ENCODE measurements at regions of chr11 and their contacts with region 1.

Region 1: GRCh38 chr11:13335319-13335718 is 57.7 kb downstream of the BMAL1 start:
- DNase-seq: peak; percentile 74
- H3K4me3 Mint-ChIP-seq: no peak overlapping the region
- H3K27ac Mint-ChIP-seq: no peak overlapping the region
- H3K4me1 Mint-ChIP-seq: peaks cover 68% of the 10 kb centered on the region
- H3K27me3 Mint-ChIP-seq: no peaks in the 10 kb centered on the region

Region 2: GRCh38 chr11:13183094-13183825 is 152.1 kb before region 1 on chr11:
- CTCF ChIA-PET with region 1: interaction called, 11 read pairs
- POLR2A ChIA-PET with region 1: no interaction called
- DNase-seq: peak; percentile 21
- H3K4me3 Mint-ChIP-seq: no peak overlapping the region
- H3K27ac Mint-ChIP-seq: no peak overlapping the region
- H3K4me1 Mint-ChIP-seq: peaks cover 8% of the 10 kb centered on the region
- H3K27me3 Mint-ChIP-seq: peaks cover 18% of the 10 kb centered on the region

Region 3: DNA sequence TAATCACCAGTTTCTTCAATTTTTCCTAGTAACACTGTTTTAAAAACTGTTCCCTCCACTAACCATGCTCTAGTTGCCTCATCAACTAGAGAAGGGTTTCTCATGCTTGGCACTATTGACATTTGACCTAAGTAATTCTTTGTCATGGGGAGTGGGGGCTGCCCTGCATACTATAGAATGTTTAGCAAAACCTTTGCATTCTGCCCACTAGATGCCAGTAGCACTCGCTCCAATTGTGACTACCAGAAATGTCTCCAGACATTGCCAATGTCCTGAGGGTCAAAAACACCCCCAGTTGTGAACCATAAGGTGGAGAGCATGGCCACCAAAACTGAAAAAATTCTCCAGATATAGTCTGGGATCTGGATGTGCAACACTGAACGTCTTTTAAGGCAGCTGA is 85.3 kb before region 1 on chr11:
- CTCF ChIA-PET with region 1: interaction called, 13 read pairs
- POLR2A ChIA-PET with region 1: no interaction called
- DNase-seq: no peak
- H3K4me3 Mint-ChIP-seq: no peak overlapping the region
- H3K27ac Mint-ChIP-seq: no peak overlapping the region
- H3K4me1 Mint-ChIP-seq: no peaks in the 10 kb centered on the region
- H3K27me3 Mint-ChIP-seq: peaks cover 17% of the 10 kb centered on the region

Region 4: DNA sequence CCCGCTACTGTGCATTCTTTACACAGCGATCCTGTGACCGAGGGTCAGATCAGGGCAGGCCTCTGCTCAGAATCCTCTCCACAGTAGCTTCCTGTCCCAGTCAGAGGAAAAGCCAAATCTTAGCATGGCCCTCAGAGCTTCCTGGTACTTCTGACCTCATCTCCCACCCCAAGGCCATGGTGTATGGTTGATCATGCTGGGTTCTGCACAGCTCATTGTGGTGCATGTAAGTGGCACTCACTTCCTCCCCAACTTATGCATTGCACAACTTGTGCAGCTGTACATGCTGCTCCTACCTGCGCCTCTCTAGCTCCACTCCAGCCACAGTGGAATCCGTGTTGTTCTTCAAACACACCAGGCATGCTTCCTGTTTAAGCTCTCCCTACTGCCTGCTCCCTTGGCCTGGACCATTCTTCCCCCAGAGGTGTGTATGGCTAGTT is 37.4 kb before region 1 on chr11:
- CTCF ChIA-PET with region 1: no interaction called
- POLR2A ChIA-PET with region 1: interaction called, 11 read pairs
- DNase-seq: peak; percentile 66
- H3K4me3 Mint-ChIP-seq: no peak overlapping the region
- H3K27ac Mint-ChIP-seq: peak overlapping the region; percentile 74
- H3K4me1 Mint-ChIP-seq: peaks cover 76% of the 10 kb centered on the region
- H3K27me3 Mint-ChIP-seq: no peaks in the 10 kb centered on the region

Region 5: DNA sequence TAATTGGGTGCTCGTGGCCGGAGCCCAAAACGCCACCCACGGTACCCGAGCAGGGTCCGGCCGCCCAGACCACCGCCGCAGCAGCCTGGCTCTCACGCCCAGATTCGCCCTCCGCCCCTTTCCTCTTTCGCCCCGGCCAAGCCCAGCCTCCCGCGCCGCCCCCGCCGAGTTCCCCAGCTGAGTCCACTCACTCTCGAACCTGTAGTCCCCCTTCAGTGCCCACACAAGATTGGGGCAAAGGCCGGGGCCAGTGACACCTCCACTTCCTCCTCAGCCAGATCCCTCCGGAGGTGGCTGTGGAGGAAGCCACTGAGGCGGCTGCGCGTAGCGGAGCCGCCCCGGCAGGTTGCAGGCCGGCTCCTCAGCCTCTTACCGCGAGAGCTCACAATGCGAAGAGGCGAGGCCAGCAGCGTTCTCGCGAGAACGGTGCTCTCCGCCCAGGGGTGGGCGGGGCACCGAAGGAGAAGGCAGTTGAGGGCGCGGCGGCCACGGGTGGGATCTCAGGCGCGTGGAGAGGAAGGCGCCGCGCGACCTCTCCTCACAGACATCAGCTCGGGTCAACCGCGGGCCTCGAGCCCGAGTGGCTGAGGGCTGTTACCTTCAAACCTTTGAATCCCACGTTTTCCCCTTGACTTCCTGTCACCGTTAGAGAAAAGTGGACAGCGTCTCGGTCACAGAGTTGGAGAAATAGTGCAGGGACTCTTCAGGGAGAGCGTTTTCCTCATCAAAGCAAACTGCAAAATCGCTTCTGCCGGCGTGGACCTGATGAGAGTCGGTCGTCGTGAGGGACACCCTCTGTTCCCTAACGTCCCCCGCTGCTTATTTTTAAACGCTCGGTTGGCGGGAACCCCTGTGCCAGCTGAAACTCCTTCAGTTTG is 127.8 kb after region 1 on chr11 and contains the start of gene BTBD10:
- CTCF ChIA-PET with region 1: interaction called, 3 read pairs
- POLR2A ChIA-PET with region 1: interaction called, 14 read pairs
- DNase-seq: peak; percentile 94
- H3K4me3 Mint-ChIP-seq: peak within 1 kb of the TSS; percentile 97
- H3K27ac Mint-ChIP-seq: peak within 1 kb of the TSS; percentile 97
- H3K4me1 Mint-ChIP-seq: peaks cover 42% of the 10 kb centered on the region
- H3K27me3 Mint-ChIP-seq: peaks cover 4% of the 10 kb centered on the region
- total RNA-seq, gene BTBD10: 26.0 to 26.3 TPM

Region 6: GRCh38 chr11:13503393-13503792 is 168.1 kb after region 1 on chr11:
- CTCF ChIA-PET with region 1: no interaction called
- POLR2A ChIA-PET with region 1: no interaction called
- DNase-seq: no peak
- H3K4me3 Mint-ChIP-seq: no peak overlapping the region
- H3K27ac Mint-ChIP-seq: no peak overlapping the region
- H3K4me1 Mint-ChIP-seq: no peaks in the 10 kb centered on the region
- H3K27me3 Mint-ChIP-seq: peaks cover 7% of the 10 kb centered on the region